ENCODE measurements at regions of chr3 and their contacts with region 1.

Region 1: DNA sequence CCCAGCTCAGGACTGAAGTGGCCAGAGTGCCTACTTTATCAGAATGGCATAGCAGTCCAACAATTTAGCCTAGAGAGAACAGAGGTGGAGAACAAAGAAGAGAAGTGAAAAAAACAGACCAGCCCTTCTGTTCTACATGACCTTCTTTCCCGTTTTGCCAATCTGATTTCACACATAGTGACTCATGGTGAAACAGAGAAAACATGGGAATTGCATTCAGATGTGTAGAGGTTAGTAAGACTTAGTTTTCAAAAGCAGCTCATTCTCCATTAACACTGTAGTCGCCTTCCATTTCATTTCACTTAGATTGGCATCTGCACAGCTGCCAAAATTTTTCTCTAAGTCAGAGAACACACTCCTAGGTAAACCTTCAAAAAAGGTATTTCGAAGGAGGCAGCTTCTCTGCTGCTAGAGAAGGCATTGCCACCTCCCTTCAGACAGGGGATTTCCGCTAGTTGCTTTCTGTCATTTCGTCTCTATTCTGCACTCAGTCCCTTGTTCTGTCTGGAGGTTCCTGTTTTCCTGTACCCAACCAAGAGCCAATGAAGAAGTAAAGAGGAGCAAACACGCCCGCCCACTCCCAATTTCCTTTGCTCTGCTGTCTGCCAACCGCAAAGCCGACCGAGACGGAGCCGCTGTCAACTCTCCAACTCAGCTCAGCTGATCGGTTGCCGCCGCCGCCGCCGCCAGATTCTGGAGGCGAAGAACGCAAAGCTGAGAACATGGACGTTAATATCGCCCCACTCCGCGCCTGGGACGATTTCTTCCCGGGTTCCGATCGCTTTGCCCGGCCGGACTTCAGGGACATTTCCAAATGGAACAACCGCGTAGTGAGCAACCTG is at the start of gene ARL6IP5:
- DNase-seq: peak; percentile 97
- H3K4me3 Mint-ChIP-seq: peak within 1 kb of the TSS; percentile 96
- H3K27ac Mint-ChIP-seq: peak within 1 kb of the TSS; percentile 95
- H3K4me1 Mint-ChIP-seq: peaks cover 45% of the 10 kb centered on the region
- H3K27me3 Mint-ChIP-seq: no peaks in the 10 kb centered on the region
- total RNA-seq, gene ARL6IP5: 118 and 122 TPM in 2 replicates

Region 2: GRCh38 chr3:69013253-69014021 is 71.1 kb before region 1 on chr3 and contains the start of gene EOGT:
- intact Hi-C with region 1: loop called (anchors 2 kb)
- DNase-seq: peak; percentile 95
- H3K4me3 Mint-ChIP-seq: peak within 1 kb of the TSS; percentile 85
- H3K27ac Mint-ChIP-seq: peak within 1 kb of the TSS; percentile 90
- H3K4me1 Mint-ChIP-seq: peaks cover 15% of the 10 kb centered on the region
- H3K27me3 Mint-ChIP-seq: no peaks in the 10 kb centered on the region
- total RNA-seq, gene EOGT: 12.6 and 13.5 TPM in 2 replicates

Region 3: DNA sequence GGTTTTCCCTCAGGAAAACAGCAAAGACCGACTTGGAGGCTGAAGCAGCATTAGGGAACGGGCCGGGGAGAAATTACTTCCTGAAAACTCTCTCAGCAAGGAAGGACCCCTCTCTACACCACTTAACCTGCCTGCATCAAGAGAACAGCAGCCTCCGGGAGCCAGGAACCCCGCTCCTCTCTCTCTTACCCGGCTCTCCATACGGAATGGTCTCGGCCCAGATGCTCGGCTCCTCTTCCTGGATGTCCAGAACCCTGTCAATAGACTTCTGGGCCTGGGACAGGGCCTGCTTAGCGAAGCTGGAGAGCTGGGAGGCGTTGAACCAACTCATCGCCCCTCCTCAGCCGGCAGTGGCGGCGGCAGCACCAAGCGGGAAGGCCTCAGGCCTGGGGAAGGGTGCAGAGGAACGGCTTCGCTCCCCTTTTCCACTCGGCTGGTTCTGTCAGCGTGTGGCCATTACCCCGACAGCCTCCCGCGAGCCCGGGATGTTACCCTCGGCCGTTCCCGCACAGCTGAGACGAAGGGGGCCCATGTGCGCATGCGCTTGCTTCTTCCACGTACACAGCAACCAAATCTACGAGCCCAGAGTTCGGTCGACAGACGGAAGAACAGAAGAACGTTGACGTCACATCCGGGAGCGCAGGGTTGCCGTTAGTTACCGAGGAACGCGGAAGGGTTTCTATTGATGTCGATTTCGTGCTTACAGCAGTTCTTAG is 32.6 kb before region 1 on chr3 and contains the start of gene TMF1:
- intact Hi-C with region 1: loop called (anchors 1 kb)
- DNase-seq: peak; percentile 99
- H3K4me3 Mint-ChIP-seq: peak within 1 kb of the TSS; percentile 95
- H3K27ac Mint-ChIP-seq: peak within 1 kb of the TSS; percentile 95
- H3K4me1 Mint-ChIP-seq: peaks cover 35% of the 10 kb centered on the region
- H3K27me3 Mint-ChIP-seq: no peaks in the 10 kb centered on the region
- total RNA-seq, gene TMF1: 35.9 and 39.0 TPM in 2 replicates

Region 4: DNA sequence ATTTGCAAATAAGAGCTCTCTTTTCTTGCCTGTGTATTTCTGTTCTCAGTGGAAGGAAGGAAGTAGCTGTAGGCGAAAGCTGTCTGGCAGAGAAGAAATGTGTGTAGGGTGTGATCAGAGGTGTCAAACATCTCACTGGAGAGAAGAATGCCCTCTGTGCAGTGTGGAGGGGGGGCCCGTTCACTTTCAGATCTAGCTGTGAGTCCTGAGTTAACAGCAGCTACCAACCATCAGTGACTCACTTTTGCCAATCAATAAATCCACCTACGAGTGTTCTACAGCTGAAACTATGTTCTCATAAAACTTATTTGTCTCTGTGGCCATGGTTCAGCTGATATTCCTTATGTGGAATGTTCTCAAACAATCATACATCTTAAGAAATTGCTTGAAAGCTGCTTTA is 197.6 kb after region 1 on chr3:
- intact Hi-C with region 1: loop called (anchors 5 kb)
- DNase-seq: peak; percentile 69
- H3K4me3 Mint-ChIP-seq: peak overlapping the region; percentile 50
- H3K27ac Mint-ChIP-seq: peak overlapping the region; percentile 87
- H3K4me1 Mint-ChIP-seq: peaks cover 18% of the 10 kb centered on the region
- H3K27me3 Mint-ChIP-seq: peaks cover under 1% of the 10 kb centered on the region

Region 5: GRCh38 chr3:69319652-69320051 is 235.1 kb after region 1 on chr3:
- intact Hi-C with region 1: no loop called
- DNase-seq: no peak
- H3K4me3 Mint-ChIP-seq: no peak overlapping the region
- H3K27ac Mint-ChIP-seq: no peak overlapping the region
- H3K4me1 Mint-ChIP-seq: peaks cover 24% of the 10 kb centered on the region
- H3K27me3 Mint-ChIP-seq: no peaks in the 10 kb centered on the region

Region 6: DNA sequence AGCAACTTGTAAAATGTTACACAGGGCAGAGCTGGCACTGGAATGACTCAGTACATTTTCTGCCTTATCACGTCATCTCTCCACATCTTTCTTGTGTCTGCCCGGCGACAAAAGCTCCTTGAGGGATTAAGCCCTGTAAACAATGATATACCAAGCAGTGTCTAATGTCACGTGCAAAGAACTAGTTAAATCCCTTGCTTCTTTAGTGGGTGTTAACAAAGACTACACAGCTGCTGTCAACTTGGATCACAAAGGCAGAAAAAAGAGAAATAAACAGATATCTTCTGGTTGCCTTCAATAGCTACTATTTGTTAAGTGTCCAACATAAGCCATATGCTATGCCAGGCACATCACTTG is 349.4 kb after region 1 on chr3:
- intact Hi-C with region 1: loop called (anchors 2 kb)
- DNase-seq: no peak
- H3K4me3 Mint-ChIP-seq: no peak overlapping the region
- H3K27ac Mint-ChIP-seq: peak overlapping the region; percentile 76
- H3K4me1 Mint-ChIP-seq: peaks cover 40% of the 10 kb centered on the region
- H3K27me3 Mint-ChIP-seq: peaks cover 3% of the 10 kb centered on the region

Region 7: GRCh38 chr3:71064288-71064955 is 1979.9 kb after region 1 on chr3:
- intact Hi-C with region 1: loop called (anchors 5 kb)
- DNase-seq: peak; percentile 92
- H3K4me3 Mint-ChIP-seq: no peak overlapping the region
- H3K27ac Mint-ChIP-seq: no peak overlapping the region
- H3K4me1 Mint-ChIP-seq: peaks cover 55% of the 10 kb centered on the region
- H3K27me3 Mint-ChIP-seq: no peaks in the 10 kb centered on the region